OCI-LY7 (cell line): ENCODE measurements at regions of chr9 and their contacts with region 1.

Region 1: GRCh38 chr9:99819856-99820684 is 1.6 kb upstream of the NR4A3 start:
- DNase-seq: peak; percentile 95
- H3K4me3 ChIP-seq: peak overlapping the region; percentile 73
- H3K27ac ChIP-seq: peak overlapping the region; percentile 80
- H3K4me1 ChIP-seq: peaks cover 36% of the 10 kb centered on the region
- CTCF ChIP-seq: peak; percentile 45

Region 2: GRCh38 chr9:99221621-99222415 is 598.3 kb before region 1 on chr9 and contains the starts of genes ALG2 and SEC61B:
- CTCF ChIA-PET with region 1: no interaction called
- POLR2A ChIA-PET with region 1: interaction called, 3 read pairs
- intact Hi-C with region 1: loop called (anchors 1 kb)
- DNase-seq: peak; percentile 96
- H3K4me3 ChIP-seq: peak within 1 kb of the TSS; percentile 91
- H3K27ac ChIP-seq: peak within 1 kb of the TSS; percentile 72
- H3K4me1 ChIP-seq: peaks cover 35% of the 10 kb centered on the region
- CTCF ChIP-seq: no peak
- total RNA-seq, gene ALG2: 22.2 and 26.5 TPM in 2 replicates
- total RNA-seq, gene SEC61B: 97.5 and 106 TPM in 2 replicates

Region 3: DNA sequence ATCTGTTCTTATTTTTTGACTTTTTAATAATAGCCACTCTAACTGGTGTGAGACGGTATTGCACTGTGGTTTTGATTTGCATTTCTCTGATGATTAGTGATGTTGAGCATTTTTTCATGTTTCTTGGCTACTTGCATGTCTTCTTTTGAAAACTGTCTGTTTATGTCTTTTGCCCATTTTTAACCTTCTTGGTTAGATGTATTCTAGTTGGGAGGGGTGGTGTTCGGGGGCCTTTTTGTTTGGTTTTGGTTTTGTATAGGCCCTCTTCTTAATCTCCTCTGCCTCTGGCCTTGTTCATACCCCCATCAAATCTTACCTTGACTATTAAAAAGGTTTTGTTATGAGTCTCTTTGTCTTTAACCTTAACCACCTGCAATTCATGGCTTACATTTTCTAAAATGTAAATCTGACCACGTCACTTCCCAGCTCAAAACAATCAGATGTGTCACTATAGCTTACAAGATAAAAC is 106.2 kb before region 1 on chr9:
- CTCF ChIA-PET with region 1: no interaction called
- POLR2A ChIA-PET with region 1: no interaction called
- intact Hi-C with region 1: no loop called
- DNase-seq: no peak
- H3K4me3 ChIP-seq: no peak overlapping the region
- H3K27ac ChIP-seq: no peak overlapping the region
- H3K4me1 ChIP-seq: no peaks in the 10 kb centered on the region
- CTCF ChIP-seq: no peak

Region 4: DNA sequence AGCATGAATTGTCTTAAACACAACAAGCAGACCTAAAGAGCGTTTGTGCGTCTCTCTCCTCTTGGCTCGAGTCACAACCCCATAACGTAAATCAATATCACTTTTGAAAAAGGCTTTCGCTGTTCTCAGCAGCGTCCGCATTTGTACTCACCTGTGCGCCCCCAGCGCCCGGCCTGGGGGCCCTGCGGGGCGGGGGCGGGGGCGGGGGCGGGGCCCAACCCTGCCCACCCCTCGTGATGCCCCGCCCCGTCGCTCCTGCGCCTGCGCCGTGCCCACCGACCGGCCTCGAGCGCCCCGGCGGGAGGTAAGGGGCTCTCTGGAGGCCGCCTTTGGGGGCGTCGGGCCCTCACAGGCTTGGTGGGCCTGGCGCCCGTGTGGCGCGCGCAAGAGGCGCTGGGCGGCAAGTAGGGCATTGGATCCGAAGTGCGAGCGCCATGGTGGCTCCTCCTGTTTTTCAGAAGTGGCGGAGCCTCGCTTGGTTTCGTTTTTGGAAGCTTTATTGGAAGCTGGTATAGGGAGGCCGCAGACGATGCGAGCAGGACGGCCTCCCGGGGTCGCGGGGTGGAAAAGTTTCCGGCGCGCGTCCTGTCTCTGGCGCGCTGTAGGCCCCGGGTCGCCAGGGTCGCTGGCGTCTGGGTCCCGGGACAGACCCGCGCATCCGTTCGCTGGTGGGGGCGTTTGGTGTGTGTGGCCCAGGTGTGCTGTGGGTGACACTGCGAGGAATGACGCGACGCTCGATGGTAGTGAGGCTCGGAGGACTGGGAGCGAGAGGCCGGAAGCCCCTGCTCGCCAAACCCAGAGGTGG is 86.5 kb after region 1 on chr9 and contains the start of gene STX17:
- CTCF ChIA-PET with region 1: no interaction called
- POLR2A ChIA-PET with region 1: no interaction called
- intact Hi-C with region 1: loop called (anchors 2 kb)
- DNase-seq: peak; percentile 84
- H3K4me3 ChIP-seq: peak within 1 kb of the TSS; percentile 85
- H3K27ac ChIP-seq: peak within 1 kb of the TSS; percentile 52
- H3K4me1 ChIP-seq: peaks cover 8% of the 10 kb centered on the region
- CTCF ChIP-seq: peak; percentile 32; the same call in 1 of the 2 replicates
- total RNA-seq, gene STX17: 12.1 and 12.4 TPM in 2 replicates

Region 5: GRCh38 chr9:100222674-100223073 is 402.6 kb after region 1 on chr9:
- CTCF ChIA-PET with region 1: no interaction called
- POLR2A ChIA-PET with region 1: no interaction called
- intact Hi-C with region 1: loop called (anchors 5 kb)
- DNase-seq: peak; percentile 58
- H3K4me3 ChIP-seq: no peak overlapping the region
- H3K27ac ChIP-seq: no peak overlapping the region
- H3K4me1 ChIP-seq: peaks cover 10% of the 10 kb centered on the region
- CTCF ChIP-seq: peak; percentile 83

Region 6: DNA sequence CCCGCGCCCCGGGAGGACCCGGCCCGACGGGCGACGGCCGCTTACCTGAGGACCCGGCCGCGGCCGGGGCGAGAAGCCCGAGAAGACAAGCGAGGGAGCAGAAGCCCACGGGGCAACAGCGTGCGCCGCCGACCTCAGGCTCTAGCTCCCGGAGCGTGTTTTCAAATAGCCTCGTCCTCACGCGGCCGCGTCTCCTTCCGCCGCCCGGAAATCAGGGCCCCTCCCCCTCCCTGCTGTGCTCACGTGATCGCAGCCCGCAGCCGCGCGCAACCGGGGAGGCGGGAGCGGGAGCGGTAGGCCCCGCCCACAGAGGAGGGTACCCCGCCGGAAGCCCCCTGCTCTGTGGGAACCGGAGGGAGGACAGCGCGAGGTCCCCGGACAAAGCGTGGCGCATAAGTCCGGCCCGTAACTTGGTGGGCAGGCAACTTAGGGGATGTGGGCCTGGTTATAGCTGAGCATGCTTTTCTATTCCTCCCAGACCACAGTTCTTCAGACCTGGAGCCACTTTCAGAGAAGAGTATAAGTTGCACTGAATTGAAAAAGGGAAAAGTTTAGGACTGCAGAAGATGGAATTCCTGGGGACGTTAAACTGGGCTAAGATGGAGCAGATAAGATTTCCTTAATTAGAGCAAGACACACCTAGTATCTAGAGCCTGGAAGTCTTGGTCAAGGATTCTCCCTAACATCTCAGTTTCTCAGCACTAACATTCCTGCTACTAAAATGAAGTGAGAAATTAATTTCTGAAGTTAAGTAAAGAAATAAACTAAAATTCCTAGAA is 532.8 kb after region 1 on chr9 and contains the start of gene TEX10:
- CTCF ChIA-PET with region 1: no interaction called
- POLR2A ChIA-PET with region 1: interaction called, 3 read pairs
- intact Hi-C with region 1: loop called (anchors 1 kb)
- DNase-seq: peak; percentile 94
- H3K4me3 ChIP-seq: peak within 1 kb of the TSS; percentile 91
- H3K27ac ChIP-seq: peak within 1 kb of the TSS; percentile 69
- H3K4me1 ChIP-seq: peaks cover 51% of the 10 kb centered on the region
- CTCF ChIP-seq: no peak
- total RNA-seq, gene TEX10: 39.2 and 43.9 TPM in 2 replicates